ENCODE measurements at regions of chr10 and their contacts with region 1.

Region 1: GRCh38 chr10:50624866-50625692 is 1.3 kb upstream of the SGMS1 start:
- DNase-seq: peak; percentile 91 to 93 (median 92)
- ATAC-seq: peak; percentile 73
- H3K4me3 ChIP-seq: peak overlapping the region; percentile 77
- H3K27ac ChIP-seq: peak overlapping the region; percentile 82
- H3K4me1 ChIP-seq: peaks cover 10 to 34% of the 10 kb centered on the region in 2 experiments
- H3K27me3 ChIP-seq: no peaks in the 10 kb centered on the region
- CTCF ChIP-seq: peak; percentile 75 to 97 (median 80)
- EP300 ChIP-seq: peak; percentile 5; the same call in 1 of the 2 replicates
- POLR2A ChIP-seq: peak; percentile 84
- RAD21 ChIP-seq: peak; percentile 71

Region 2: GRCh38 chr10:50325449-50326171 is 299.5 kb before region 1 on chr10:
- CTCF ChIA-PET with region 1: no interaction called
- POLR2A ChIA-PET with region 1: interaction called, 3 read pairs
- in situ Hi-C with region 1: no loop called
- intact Hi-C with region 1: loop called (anchors 5 kb)
- DNase-seq: peak in 3 of 4 experiments; percentile 39 to 92 (median 74)
- ATAC-seq: peak; percentile 58
- H3K4me3 ChIP-seq: peak overlapping the region; percentile 32
- H3K27ac ChIP-seq: peak overlapping the region; percentile 97
- H3K4me1 ChIP-seq: peaks cover 19 to 80% of the 10 kb centered on the region in 2 experiments
- H3K27me3 ChIP-seq: no peaks in the 10 kb centered on the region
- CTCF ChIP-seq: no peak
- EP300 ChIP-seq: peak; percentile 88; the same call in 1 of the 2 replicates
- POLR2A ChIP-seq: no peak
- RAD21 ChIP-seq: no peak

Region 3: GRCh38 chr10:50396491-50397311 is 228.4 kb before region 1 on chr10:
- CTCF ChIA-PET with region 1: no interaction called
- POLR2A ChIA-PET with region 1: no interaction called
- in situ Hi-C with region 1: no loop called
- intact Hi-C with region 1: no loop called
- DNase-seq: peak in 2 of 4 experiments; percentile 37 to 75
- ATAC-seq: peak; percentile 79
- H3K4me3 ChIP-seq: no peak overlapping the region
- H3K27ac ChIP-seq: peak overlapping the region; percentile 37; the same call in 1 of the 3 replicates
- H3K4me1 ChIP-seq: peaks cover 14 to 57% of the 10 kb centered on the region in 2 experiments
- H3K27me3 ChIP-seq: no peaks in the 10 kb centered on the region
- CTCF ChIP-seq: no peak
- EP300 ChIP-seq: no peak; the same call in 1 of the 2 replicates
- POLR2A ChIP-seq: no peak
- RAD21 ChIP-seq: no peak

Region 4: DNA sequence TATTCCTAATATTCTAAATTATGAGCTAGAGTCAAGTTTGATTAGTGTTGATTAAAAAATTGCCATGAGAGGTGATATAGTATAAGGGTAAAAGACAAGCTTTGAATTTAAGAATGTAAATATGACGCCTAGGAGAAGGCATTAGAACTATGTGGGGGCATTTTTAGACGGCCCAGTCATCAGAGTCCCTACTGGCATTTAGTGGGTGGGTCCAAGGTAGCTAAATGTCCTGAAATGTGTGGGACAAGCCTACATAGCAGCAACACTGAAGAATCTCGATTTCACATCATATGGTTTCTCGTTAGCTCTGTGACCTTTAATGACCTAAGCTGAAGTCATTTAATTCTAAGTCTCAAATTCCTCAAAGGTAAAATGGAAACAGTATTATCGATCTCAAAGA is 134.8 kb before region 1 on chr10:
- CTCF ChIA-PET with region 1: no interaction called
- POLR2A ChIA-PET with region 1: no interaction called
- in situ Hi-C with region 1: no loop called
- intact Hi-C with region 1: no loop called
- DNase-seq: no peak
- ATAC-seq: no peak
- H3K4me3 ChIP-seq: no peak overlapping the region
- H3K27ac ChIP-seq: no peak overlapping the region
- H3K4me1 ChIP-seq: no peaks in the 10 kb centered on the region
- H3K27me3 ChIP-seq: no peaks in the 10 kb centered on the region
- CTCF ChIP-seq: no peak
- EP300 ChIP-seq: no peak
- POLR2A ChIP-seq: no peak
- RAD21 ChIP-seq: no peak

Region 5: DNA sequence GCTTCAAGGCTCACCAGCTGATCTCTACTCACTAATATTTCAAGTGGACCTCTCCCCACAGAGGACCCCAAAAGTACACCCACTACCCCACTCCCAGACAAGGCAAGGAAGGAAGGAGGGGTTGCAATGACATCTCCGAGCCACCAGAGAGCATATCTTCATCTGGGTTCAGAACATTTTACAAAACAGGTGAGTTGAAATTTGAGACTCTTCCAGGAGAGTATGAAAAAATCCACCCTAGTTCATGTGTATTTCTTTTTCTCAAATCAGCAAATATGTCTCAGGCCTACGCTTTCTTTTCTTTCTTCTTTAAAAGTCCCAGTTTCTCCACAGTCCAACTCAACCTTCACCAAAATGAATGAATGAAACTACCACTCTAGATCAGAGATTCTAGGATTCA is 63.3 kb before region 1 on chr10:
- CTCF ChIA-PET with region 1: interaction called, 9 read pairs
- POLR2A ChIA-PET with region 1: interaction called, 4 read pairs
- in situ Hi-C with region 1: no loop called
- intact Hi-C with region 1: loop called (anchors 1 kb)
- DNase-seq: peak; percentile 50 to 69 (median 53)
- ATAC-seq: peak; percentile 52
- H3K4me3 ChIP-seq: no peak overlapping the region
- H3K27ac ChIP-seq: peak overlapping the region; percentile 3; the same call in 1 of the 3 replicates
- H3K4me1 ChIP-seq: peaks cover 26 to 64% of the 10 kb centered on the region in 2 experiments
- H3K27me3 ChIP-seq: no peaks in the 10 kb centered on the region
- CTCF ChIP-seq: peak; percentile 77 to 87 (median 86)
- EP300 ChIP-seq: no peak
- POLR2A ChIP-seq: no peak
- RAD21 ChIP-seq: peak; percentile 81 to 92

Region 6: GRCh38 chr10:50605269-50606263 is 19.5 kb before region 1 on chr10:
- CTCF ChIA-PET with region 1: no interaction called
- POLR2A ChIA-PET with region 1: interaction called, 32 read pairs
- in situ Hi-C with region 1: no loop called
- intact Hi-C with region 1: no loop called
- DNase-seq: peak in 1 of 4 experiments; percentile 69
- ATAC-seq: peak; percentile 68
- H3K4me3 ChIP-seq: no peak overlapping the region
- H3K27ac ChIP-seq: peak overlapping the region; percentile 36; the same call in 1 of the 3 replicates
- H3K4me1 ChIP-seq: peaks cover 14 to 62% of the 10 kb centered on the region in 2 experiments
- H3K27me3 ChIP-seq: no peaks in the 10 kb centered on the region
- CTCF ChIP-seq: no peak
- EP300 ChIP-seq: no peak; the same call in 1 of the 2 replicates
- POLR2A ChIP-seq: no peak
- RAD21 ChIP-seq: no peak

Measured in K562 (cell line).